Tibial artery (tissue), 4 donors: ENCODE measurements at regions of chr9 and their contacts with region 1.

Region 1: GRCh38 chr9:35116898-35117551 is 1.4 kb upstream of the ATOSB start:
- DNase-seq: peak; percentile 95 to 96
- H3K4me3 ChIP-seq: peak overlapping the region; percentile 59 to 64
- H3K27ac ChIP-seq: peak overlapping the region; percentile 97 to 100
- H3K4me1 ChIP-seq: peaks cover 4 to 46% (median 38%) of the 10 kb centered on the region in 4 donors
- H3K27me3 ChIP-seq: no peaks in the 10 kb centered on the region
- CTCF ChIP-seq: peak; percentile 93 to 96

Region 2: DNA sequence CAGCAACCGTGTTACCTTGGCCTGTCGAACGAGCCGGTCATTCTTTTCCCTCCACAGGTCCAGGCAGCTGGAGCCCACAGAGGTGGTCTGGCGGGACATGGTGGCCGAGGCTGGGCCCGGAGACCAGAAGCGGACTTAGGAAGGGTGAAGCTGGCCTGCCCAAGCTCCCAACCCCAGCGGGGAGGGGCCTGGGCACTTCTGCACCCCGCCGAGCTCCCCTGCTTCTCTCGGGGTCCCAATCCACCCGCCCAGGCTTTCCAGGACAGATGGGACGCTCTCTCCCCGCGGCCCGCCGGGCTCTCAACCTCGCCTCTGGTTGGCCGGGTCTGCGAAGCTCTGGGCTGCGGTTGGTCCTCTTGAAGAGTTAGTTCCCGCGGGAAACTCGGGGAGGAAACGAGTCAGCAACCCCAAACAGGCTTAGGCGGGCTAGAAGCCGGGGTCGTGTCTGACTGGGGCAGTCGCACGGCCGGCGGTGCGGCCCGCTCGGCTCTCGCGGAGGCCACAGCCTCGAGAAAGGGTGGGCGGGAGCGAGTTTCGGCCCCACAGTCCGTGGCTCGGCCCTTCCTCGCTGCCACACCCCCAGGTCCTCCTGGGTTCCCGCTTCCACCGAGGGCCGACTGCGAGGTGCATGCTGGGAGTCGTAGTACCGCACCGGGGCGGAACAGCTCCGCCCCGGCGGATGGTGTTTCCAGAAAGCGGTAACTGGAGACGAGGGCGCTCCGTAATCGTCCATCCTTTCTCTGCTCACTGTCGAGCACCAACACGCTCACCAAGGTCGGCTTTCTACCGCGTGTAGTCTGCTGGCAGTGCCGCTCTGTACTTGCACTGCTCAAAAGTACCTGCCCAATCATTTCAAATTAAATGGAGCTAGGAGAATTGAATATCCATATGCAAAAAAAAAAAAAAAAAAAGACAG is 37.3 kb before region 1 on chr9 and contains the start of gene FANCG:
- intact Hi-C with region 1: no loop called
- DNase-seq: peak; percentile 89 to 94
- H3K4me3 ChIP-seq: peak within 1 kb of the TSS; percentile 58 to 68
- H3K27ac ChIP-seq: peak within 1 kb of the TSS; percentile 61 to 78
- H3K4me1 ChIP-seq: peaks cover 0 to 18% (median 12%) of the 10 kb centered on the region in 4 donors
- H3K27me3 ChIP-seq: no peaks in the 10 kb centered on the region
- CTCF ChIP-seq: no peak

Region 3: DNA sequence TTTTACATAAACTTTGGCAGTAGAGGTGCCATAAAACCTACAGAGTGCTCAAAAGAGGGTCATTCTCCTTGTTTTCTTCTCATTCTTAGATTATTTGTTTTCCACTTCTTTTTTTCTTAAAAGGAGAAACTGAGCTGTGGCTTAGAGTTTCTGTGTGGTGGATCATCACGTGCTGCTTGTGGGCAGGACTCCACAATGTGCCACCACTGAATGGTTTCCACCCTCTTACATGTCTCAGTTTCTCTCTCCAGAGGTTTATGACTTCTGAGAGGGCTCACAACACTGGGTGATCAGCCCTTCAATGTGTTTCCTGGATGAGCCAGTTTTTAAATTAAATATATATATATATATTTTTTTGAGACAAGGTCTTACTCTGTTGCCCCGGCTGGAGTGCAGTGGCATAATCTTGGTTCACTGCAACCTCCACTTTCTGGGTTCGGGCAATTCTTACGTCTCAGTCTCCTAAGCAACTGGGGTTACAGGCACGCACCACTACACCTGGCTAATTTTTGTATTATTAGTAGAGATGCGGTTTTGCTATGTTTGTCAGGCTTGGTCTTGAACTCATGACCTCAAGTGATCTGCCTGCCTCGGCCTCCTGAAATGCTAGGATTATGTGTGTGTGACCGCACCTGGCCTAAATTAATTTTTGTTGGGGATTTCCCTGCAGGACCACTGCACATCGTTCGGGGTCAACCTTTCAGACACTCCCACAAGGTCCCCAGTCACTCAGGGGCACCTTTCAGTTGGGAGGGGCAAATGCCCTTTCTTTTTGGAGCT is 41.7 kb after region 1 on chr9:
- intact Hi-C with region 1: loop called (anchors 5 kb)
- DNase-seq: no peak
- H3K4me3 ChIP-seq: no peak overlapping the region
- H3K27ac ChIP-seq: no peak overlapping the region
- H3K4me1 ChIP-seq: peaks cover 0 to 10% (median 8%) of the 10 kb centered on the region in 4 donors
- H3K27me3 ChIP-seq: no peaks in the 10 kb centered on the region
- CTCF ChIP-seq: no peak

Region 4: GRCh38 chr9:35258676-35259474 is 141.8 kb after region 1 on chr9:
- intact Hi-C with region 1: loop called (anchors 2 kb)
- DNase-seq: peak; percentile 59 to 73
- H3K4me3 ChIP-seq: no peak overlapping the region
- H3K27ac ChIP-seq: no peak overlapping the region
- H3K4me1 ChIP-seq: no peaks in the 10 kb centered on the region
- H3K27me3 ChIP-seq: no peaks in the 10 kb centered on the region
- CTCF ChIP-seq: peak; percentile 63 to 69

Region 5: DNA sequence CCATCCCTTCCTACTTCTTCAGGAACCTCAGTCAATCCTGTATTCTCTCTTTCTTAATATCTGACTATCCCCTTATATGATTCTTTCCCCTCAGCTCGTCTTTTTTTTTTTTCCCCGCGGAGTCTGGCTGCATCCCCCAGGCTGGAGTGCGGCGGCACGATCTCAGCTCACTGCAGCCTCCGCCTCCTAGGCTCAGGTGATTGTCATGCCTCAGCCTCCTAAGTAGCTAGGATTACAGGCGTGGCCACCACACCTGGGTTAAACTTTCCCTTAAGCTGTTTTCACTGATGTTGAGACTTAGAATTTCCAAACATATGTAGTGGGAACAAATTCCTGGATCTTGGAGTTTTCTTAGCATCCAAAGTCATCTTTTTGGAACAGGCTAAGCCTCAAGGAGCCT is 359.6 kb after region 1 on chr9:
- intact Hi-C with region 1: loop called (anchors 5 kb)
- DNase-seq: no peak
- H3K4me3 ChIP-seq: no peak overlapping the region
- H3K27ac ChIP-seq: peak overlapping the region in 1 of 2 donors; percentile 2
- H3K4me1 ChIP-seq: peaks cover 0 to 13% (median 2%) of the 10 kb centered on the region in 4 donors
- H3K27me3 ChIP-seq: no peaks in the 10 kb centered on the region
- CTCF ChIP-seq: no peak

Region 6: DNA sequence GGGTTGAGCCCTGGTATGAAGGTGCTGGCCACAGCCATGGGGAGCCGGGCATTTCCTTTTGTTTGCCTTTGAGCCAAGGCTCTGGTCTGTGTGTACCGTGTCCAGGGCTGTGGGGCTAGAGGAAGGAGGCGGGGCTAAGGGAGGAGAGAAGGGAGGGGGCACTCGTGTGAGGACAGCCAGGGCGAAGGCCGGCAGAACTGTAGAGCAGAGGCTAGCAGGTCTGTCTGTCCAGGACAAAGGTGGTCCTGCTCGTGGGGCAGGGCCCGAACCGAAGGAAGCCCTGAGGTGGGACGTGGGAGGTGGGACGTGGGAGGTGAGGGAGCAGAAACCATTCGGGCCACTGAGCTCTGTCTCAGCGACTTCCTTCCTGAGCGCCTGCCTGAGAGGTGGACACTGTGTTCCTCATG is 446.8 kb after region 1 on chr9:
- intact Hi-C with region 1: loop called (anchors 5 kb)
- DNase-seq: peak; percentile 74 to 91
- H3K4me3 ChIP-seq: peak overlapping the region; percentile 11 to 26
- H3K27ac ChIP-seq: peak overlapping the region; percentile 83 to 93
- H3K4me1 ChIP-seq: peaks cover 0 to 66% (median 50%) of the 10 kb centered on the region in 4 donors
- H3K27me3 ChIP-seq: no peaks in the 10 kb centered on the region
- CTCF ChIP-seq: no peak